Activated naive CD4-positive, alpha-beta T cell treated with anti-CD3 and anti-CD28 coated beads for 36 hours (primary cell): ENCODE measurements at regions of chr1 and their contacts with region 1.

Region 1: GRCh38 chr1:18681423-18681835 is 50.8 kb downstream of the PAX7 start:
- DNase-seq: peak; percentile 35
- H3K4me3 Mint-ChIP-seq: no peak overlapping the region
- H3K27ac Mint-ChIP-seq: no peak overlapping the region
- H3K4me1 Mint-ChIP-seq: peaks cover 9% of the 10 kb centered on the region
- H3K27me3 Mint-ChIP-seq: peaks cover 3% of the 10 kb centered on the region

Region 2: DNA sequence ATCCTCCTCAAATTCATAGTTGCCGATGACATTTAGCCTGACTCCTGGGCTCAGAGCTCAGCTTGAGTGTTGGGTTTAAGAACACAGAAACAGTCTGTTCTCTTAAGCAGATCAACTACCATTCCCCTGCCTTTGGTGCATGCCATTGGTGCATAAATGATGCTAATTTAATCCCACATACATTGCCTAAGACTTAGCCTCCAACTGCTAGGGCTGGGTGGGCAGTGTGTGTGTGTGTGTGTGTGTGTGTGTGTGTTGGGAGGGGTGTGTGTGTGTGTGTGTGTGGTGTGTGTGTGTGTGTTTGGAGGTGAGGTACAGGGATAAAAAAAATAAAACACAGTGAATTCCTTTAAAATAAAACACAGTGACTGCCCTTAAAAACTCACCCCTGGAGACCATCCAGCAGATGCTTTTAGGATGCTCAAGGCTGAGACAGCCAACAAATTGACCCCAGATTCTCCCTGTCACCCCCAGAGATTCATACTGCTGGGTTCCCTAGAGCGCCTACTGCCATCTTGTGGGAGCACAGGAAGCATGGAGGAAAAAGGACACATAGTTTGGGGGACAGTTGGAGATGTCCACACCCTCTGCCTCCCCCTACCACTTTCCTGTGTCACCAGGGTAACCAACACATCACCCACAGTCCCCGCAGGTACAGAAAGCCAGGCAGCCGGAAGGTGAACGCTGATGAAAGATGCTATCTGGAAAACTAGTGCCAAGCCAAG is 170.1 kb before region 1 on chr1:
- CTCF ChIA-PET with region 1: no interaction called
- intact Hi-C with region 1: no loop called
- DNase-seq: no peak
- H3K4me3 Mint-ChIP-seq: no peak overlapping the region
- H3K27ac Mint-ChIP-seq: no peak overlapping the region
- H3K4me1 Mint-ChIP-seq: no peaks in the 10 kb centered on the region
- H3K27me3 Mint-ChIP-seq: peaks cover 9% of the 10 kb centered on the region

Region 3: GRCh38 chr1:18597160-18598042 is 84.0 kb before region 1 on chr1:
- CTCF ChIA-PET with region 1: interaction called, 37 read pairs
- intact Hi-C with region 1: loop called (anchors 1 kb)
- DNase-seq: peak; percentile 75
- H3K4me3 Mint-ChIP-seq: no peak overlapping the region
- H3K27ac Mint-ChIP-seq: no peak overlapping the region
- H3K4me1 Mint-ChIP-seq: no peaks in the 10 kb centered on the region
- H3K27me3 Mint-ChIP-seq: peaks cover 13% of the 10 kb centered on the region

Region 4: DNA sequence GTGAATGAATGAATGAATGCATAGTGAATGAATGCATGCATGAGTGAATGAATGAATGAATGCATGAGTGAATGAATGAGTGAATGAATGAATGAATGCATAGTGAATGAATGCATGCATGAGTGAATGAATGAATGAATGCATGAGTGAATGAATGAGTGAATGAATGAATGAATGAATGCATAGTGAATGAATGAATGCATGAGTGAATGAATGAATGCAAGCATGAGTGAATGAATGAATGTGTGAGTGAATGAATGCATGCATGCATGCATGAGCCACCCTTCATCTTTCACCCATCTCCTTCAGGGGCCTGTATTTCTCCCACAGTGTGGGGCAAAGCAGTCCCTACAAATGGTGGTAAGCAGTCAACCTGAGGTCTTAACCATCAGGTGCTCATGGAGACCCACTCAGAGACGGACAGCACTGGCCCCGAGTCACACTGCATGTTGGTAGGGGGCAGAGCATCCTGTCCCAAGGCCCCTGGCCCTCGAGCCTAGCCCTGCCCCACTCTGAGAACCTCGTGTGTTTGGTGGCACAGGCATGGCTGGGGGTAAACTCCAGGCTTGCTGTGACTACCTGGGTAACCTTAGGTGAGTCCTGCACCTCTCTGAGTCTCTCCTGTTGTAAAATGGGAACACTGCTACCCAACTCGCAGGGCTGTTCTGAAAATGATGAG is 78.8 kb before region 1 on chr1:
- CTCF ChIA-PET with region 1: interaction called, 37 read pairs
- intact Hi-C with region 1: loop called (anchors 1 kb)
- DNase-seq: no peak
- H3K4me3 Mint-ChIP-seq: no peak overlapping the region
- H3K27ac Mint-ChIP-seq: no peak overlapping the region
- H3K4me1 Mint-ChIP-seq: no peaks in the 10 kb centered on the region
- H3K27me3 Mint-ChIP-seq: peaks cover 4% of the 10 kb centered on the region

Region 5: GRCh38 chr1:18653367-18653766 is 28.1 kb before region 1 on chr1:
- CTCF ChIA-PET with region 1: interaction called, 11 read pairs
- intact Hi-C with region 1: no loop called
- DNase-seq: no peak
- H3K4me3 Mint-ChIP-seq: no peak overlapping the region
- H3K27ac Mint-ChIP-seq: no peak overlapping the region
- H3K4me1 Mint-ChIP-seq: peaks cover 59% of the 10 kb centered on the region
- H3K27me3 Mint-ChIP-seq: peaks cover 13% of the 10 kb centered on the region

Region 6: GRCh38 chr1:18820791-18821641 is 139.6 kb after region 1 on chr1:
- CTCF ChIA-PET with region 1: no interaction called
- intact Hi-C with region 1: loop called (anchors 10 kb)
- DNase-seq: peak; percentile 81
- H3K4me3 Mint-ChIP-seq: no peak overlapping the region
- H3K27ac Mint-ChIP-seq: no peak overlapping the region
- H3K4me1 Mint-ChIP-seq: no peaks in the 10 kb centered on the region
- H3K27me3 Mint-ChIP-seq: peaks cover 45% of the 10 kb centered on the region